Activated CD4-positive, alpha-beta memory T cell treated with anti-CD3 and anti-CD28 coated beads for 36 hours (primary cell): ENCODE measurements at regions of chr22 and their contacts with region 1.

Region 1: GRCh38 chr22:30289134-30289979 is at the start of gene CASTOR1:
- DNase-seq: peak; percentile 94
- H3K4me3 Mint-ChIP-seq: peak within 1 kb of the TSS; percentile 76
- H3K27ac Mint-ChIP-seq: peak within 1 kb of the TSS; percentile 69
- H3K4me1 Mint-ChIP-seq: peaks cover 22% of the 10 kb centered on the region
- H3K27me3 Mint-ChIP-seq: no peaks in the 10 kb centered on the region
- total RNA-seq, gene CASTOR1: 3.6 to 4.0 TPM

Region 2: GRCh38 chr22:30104501-30105156 is 184.7 kb before region 1 on chr22:
- CTCF ChIA-PET with region 1: interaction called, 77 read pairs
- POLR2A ChIA-PET with region 1: no interaction called
- intact Hi-C with region 1: loop called (anchors 1 kb)
- DNase-seq: no peak
- H3K4me3 Mint-ChIP-seq: no peak overlapping the region
- H3K27ac Mint-ChIP-seq: peak overlapping the region; percentile 85
- H3K4me1 Mint-ChIP-seq: peaks cover 39% of the 10 kb centered on the region
- H3K27me3 Mint-ChIP-seq: no peaks in the 10 kb centered on the region

Region 3: DNA sequence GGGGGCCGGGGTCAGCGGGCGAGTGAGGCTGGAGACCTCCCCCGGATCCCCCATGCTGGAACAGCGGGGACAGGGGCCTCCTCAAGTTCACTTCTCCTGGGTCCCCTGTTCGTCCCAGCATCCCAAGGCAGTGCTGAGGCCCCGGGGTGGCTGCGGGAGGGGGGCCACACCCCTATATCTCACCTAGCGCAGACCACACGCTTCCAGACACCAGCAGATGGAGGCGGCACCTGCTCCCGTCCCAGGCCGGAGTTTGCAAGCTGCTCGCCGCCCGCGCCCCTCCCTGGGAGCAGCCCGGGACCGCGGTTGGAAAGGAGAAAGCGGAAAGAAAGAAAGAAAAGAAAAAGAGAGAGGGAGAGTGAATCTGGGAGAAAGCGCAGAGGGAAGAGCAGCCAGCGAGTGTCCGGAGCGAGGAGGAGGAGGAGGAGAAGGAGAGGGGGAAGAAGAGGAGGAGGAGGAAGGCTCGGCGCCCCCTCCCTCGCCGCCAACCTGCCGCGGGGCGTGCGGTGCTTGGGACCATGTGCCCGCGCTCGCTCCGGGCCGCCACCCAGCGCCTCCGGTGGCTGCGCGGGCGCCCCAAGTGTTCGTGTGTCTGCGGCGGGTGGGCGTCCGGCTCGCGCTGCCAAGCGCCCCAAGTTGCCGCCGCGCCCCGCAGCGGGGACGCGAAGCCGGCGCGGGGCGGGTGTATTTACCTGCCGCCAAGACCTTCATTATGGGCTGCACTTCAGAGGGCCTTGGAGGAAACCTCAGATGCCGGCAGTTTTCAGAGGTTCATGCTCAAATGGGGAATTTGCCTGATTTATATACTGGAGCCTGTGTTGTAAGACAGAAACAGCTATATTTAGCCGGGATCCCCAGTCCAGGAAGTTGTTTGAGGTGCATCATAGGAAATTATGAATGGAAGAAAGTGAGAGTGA is 43.1 kb before region 1 on chr22 and contains the start of gene LIF:
- CTCF ChIA-PET with region 1: interaction called, 10 read pairs
- POLR2A ChIA-PET with region 1: no interaction called
- intact Hi-C with region 1: no loop called
- DNase-seq: peak; percentile 69
- H3K4me3 Mint-ChIP-seq: peak within 1 kb of the TSS; percentile 90
- H3K27ac Mint-ChIP-seq: peak within 1 kb of the TSS; percentile 94
- H3K4me1 Mint-ChIP-seq: peaks cover 73% of the 10 kb centered on the region
- H3K27me3 Mint-ChIP-seq: no peaks in the 10 kb centered on the region
- total RNA-seq, gene LIF: 176 to 189 TPM

Region 4: DNA sequence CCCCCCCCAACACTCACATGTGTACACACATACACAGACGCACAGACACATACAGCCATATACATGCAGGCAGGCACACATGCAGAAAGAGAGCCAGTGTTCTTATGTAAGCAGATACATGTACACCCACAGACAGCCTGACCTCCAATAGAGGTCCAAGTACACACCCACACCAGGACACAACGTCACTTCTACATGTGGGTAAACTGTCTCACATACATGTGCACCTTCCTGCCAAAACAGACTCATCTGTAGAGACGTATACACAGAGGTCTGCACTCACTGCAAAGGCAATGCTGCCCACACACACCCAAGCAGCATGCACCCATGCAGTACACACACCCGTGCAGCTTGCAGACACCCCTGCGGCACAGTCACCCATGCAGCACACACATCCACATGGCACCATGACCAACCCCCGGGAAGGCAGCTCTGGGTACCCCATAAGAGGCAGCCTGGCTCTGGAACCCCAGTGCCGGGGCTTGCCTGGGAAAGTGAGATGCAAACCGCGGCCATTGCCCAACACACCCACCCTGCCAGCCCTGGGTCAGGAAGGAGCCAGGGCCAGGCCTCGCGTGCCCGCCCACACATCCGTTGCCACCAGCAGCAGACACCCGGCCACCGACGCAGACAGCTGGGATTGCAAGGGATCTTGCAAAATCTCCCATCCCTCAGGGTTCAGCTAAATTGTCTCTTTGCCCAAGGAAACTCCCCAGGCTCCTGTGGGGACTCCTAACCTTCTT is 10.1 kb before region 1 on chr22:
- CTCF ChIA-PET with region 1: interaction called, 13 read pairs
- POLR2A ChIA-PET with region 1: no interaction called
- intact Hi-C with region 1: no loop called
- DNase-seq: no peak
- H3K4me3 Mint-ChIP-seq: no peak overlapping the region
- H3K27ac Mint-ChIP-seq: no peak overlapping the region
- H3K4me1 Mint-ChIP-seq: peaks cover 45% of the 10 kb centered on the region
- H3K27me3 Mint-ChIP-seq: no peaks in the 10 kb centered on the region

Region 5: DNA sequence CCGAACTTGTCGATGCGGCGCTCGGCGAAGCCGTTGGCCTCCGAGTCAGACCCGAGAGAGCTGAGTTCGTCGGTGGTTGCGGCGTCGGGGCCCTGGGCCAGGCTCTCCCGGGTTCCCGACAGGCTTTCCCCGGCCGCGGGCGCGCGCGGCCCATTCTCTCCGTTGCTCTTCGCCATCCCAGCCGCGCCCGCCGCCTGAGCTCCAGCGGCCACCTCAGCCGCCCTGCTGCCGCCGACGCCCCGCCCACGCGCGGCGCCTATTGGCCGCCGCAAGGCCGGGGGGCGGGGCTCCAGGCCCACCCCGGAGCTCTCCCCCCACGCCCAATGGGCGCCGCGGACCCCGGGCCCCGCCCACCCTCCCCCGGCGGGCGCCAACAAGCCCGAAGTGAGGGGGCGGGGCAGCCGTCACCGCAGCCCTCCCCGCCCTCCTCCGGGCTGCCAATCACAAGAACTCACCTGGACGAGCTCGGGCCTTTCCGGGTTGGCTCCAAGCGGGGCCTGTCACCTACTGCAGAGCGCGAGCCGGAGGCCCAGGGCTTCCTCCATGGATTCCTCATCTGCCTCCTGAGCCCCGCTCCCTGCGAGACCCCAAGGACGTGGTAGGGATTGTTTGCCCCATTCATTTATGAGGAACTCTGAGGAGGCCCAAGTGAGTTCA is 37.5 kb after region 1 on chr22 and contains the start of gene TBC1D10A:
- CTCF ChIA-PET with region 1: interaction called, 117 read pairs
- POLR2A ChIA-PET with region 1: interaction called, 14 read pairs
- intact Hi-C with region 1: loop called (anchors 1 kb)
- DNase-seq: peak; percentile 96
- H3K4me3 Mint-ChIP-seq: peak within 1 kb of the TSS; percentile 83
- H3K27ac Mint-ChIP-seq: peak within 1 kb of the TSS; percentile 81
- H3K4me1 Mint-ChIP-seq: peaks cover 42% of the 10 kb centered on the region
- H3K27me3 Mint-ChIP-seq: no peaks in the 10 kb centered on the region
- total RNA-seq, gene TBC1D10A: 28.9 to 29.0 TPM

Region 6: DNA sequence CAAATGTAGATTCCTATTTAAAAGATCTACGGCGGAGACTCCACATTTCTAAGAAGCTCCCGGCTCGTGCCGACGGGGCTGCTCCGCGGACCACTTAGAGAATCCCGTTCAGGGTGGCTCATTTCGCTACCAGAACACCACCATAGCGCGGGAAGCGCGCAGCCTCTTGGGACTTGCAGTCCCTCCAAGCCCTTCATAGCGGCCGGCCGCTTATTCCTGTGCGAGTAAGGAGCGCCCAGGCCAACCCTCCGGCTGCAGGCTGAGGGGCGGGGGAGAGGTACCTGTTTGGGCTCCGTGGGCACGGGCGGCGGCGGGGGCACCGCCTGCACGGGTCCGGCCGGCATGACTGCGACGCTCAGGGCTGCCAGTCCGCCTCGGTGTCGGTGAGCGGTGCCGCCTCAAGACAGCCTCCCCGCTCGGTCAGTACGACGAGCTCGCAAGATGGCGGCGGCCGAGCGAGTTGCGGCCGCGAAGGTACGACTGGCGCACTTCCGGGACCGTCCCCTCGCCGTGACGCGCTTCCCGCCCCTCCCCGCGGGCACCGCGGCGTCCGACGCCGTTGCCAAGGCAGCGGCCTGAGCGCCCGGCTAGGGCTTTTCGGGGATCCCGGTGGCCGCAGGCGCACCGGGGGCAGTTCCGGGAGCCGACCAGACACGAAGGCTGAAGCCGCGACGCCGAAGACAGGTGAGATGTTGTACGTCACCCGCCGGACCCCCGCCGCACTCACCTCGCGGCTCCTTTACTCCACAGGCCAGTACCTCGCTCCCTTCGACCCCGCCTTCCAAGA is 67.3 kb after region 1 on chr22 and contains the starts of genes CCDC157 and SF3A1:
- CTCF ChIA-PET with region 1: interaction called, 21 read pairs
- POLR2A ChIA-PET with region 1: interaction called, 7 read pairs
- intact Hi-C with region 1: loop called (anchors 2 kb)
- DNase-seq: peak; percentile 91
- H3K4me3 Mint-ChIP-seq: peak within 1 kb of the TSS; percentile 93
- H3K27ac Mint-ChIP-seq: peak within 1 kb of the TSS; percentile 85
- H3K4me1 Mint-ChIP-seq: peaks cover 48% of the 10 kb centered on the region
- H3K27me3 Mint-ChIP-seq: no peaks in the 10 kb centered on the region
- total RNA-seq, gene CCDC157: 2.1 to 2.9 TPM
- total RNA-seq, gene SF3A1: 255 to 273 TPM

Region 7: GRCh38 chr22:30396871-30397655 is 107.7 kb after region 1 on chr22 and contains the start of gene SEC14L2:
- CTCF ChIA-PET with region 1: interaction called, 414 read pairs
- POLR2A ChIA-PET with region 1: interaction called, 6 read pairs
- intact Hi-C with region 1: no loop called
- DNase-seq: peak; percentile 74
- H3K4me3 Mint-ChIP-seq: peak within 1 kb of the TSS; percentile 86
- H3K27ac Mint-ChIP-seq: no peak within 1 kb of the TSS
- H3K4me1 Mint-ChIP-seq: peaks cover 29% of the 10 kb centered on the region
- H3K27me3 Mint-ChIP-seq: no peaks in the 10 kb centered on the region
- total RNA-seq, gene SEC14L2: 12.8 to 15.3 TPM

Region 8: GRCh38 chr22:30541961-30542810 is 252.8 kb after region 1 on chr22:
- CTCF ChIA-PET with region 1: no interaction called
- POLR2A ChIA-PET with region 1: no interaction called
- intact Hi-C with region 1: no loop called
- DNase-seq: no peak
- H3K4me3 Mint-ChIP-seq: no peak overlapping the region
- H3K27ac Mint-ChIP-seq: no peak overlapping the region
- H3K4me1 Mint-ChIP-seq: peaks cover 2% of the 10 kb centered on the region
- H3K27me3 Mint-ChIP-seq: peaks cover 31% of the 10 kb centered on the region

Region 9: GRCh38 chr22:30953206-30953605 is 663.8 kb after region 1 on chr22:
- CTCF ChIA-PET with region 1: no interaction called
- POLR2A ChIA-PET with region 1: no interaction called
- intact Hi-C with region 1: no loop called
- DNase-seq: no peak
- H3K4me3 Mint-ChIP-seq: no peak overlapping the region
- H3K27ac Mint-ChIP-seq: no peak overlapping the region
- H3K4me1 Mint-ChIP-seq: peaks cover 25% of the 10 kb centered on the region
- H3K27me3 Mint-ChIP-seq: no peaks in the 10 kb centered on the region